B cell (primary cell): ENCODE measurements at regions of chr10 and their contacts with region 1.

Region 1: GRCh38 chr10:101840741-101841453 is 2.7 kb downstream of the KCNIP2 start:
- DNase-seq: peak; percentile 88
- ATAC-seq: peak; percentile 59
- H3K4me3 ChIP-seq: peak overlapping the region in 4 of 5 experiments; percentile 44 to 79 (median 68)
- H3K4me3 Mint-ChIP-seq: peak overlapping the region; percentile 95
- H3K27ac ChIP-seq: peak overlapping the region in 1 of 2 donors; percentile 51
- H3K27ac Mint-ChIP-seq: peak overlapping the region; percentile 92
- H3K4me1 ChIP-seq: peaks cover 50 to 60% of the 10 kb centered on the region in 2 donors
- H3K4me1 Mint-ChIP-seq: peaks cover 52% of the 10 kb centered on the region
- H3K27me3 ChIP-seq: no peaks in the 10 kb centered on the region
- H3K27me3 Mint-ChIP-seq: no peaks in the 10 kb centered on the region
- CTCF ChIP-seq: peak; percentile 91

Region 2: GRCh38 chr10:101749047-101750016 is 91.6 kb before region 1 on chr10:
- CTCF ChIA-PET with region 1: no interaction called
- POLR2A ChIA-PET with region 1: no interaction called
- intact Hi-C with region 1: no loop called
- DNase-seq: no peak
- ATAC-seq: no peak
- H3K4me3 ChIP-seq: no peak overlapping the region
- H3K4me3 Mint-ChIP-seq: no peak overlapping the region
- H3K27ac ChIP-seq: no peak overlapping the region
- H3K27ac Mint-ChIP-seq: no peak overlapping the region
- H3K4me1 ChIP-seq: no peaks in the 10 kb centered on the region
- H3K4me1 Mint-ChIP-seq: no peaks in the 10 kb centered on the region
- H3K27me3 ChIP-seq: peaks cover 0 to 5% (median 2%) of the 10 kb centered on the region in 4 experiments
- H3K27me3 Mint-ChIP-seq: peaks cover 15% of the 10 kb centered on the region
- CTCF ChIP-seq: no peak

Region 3: DNA sequence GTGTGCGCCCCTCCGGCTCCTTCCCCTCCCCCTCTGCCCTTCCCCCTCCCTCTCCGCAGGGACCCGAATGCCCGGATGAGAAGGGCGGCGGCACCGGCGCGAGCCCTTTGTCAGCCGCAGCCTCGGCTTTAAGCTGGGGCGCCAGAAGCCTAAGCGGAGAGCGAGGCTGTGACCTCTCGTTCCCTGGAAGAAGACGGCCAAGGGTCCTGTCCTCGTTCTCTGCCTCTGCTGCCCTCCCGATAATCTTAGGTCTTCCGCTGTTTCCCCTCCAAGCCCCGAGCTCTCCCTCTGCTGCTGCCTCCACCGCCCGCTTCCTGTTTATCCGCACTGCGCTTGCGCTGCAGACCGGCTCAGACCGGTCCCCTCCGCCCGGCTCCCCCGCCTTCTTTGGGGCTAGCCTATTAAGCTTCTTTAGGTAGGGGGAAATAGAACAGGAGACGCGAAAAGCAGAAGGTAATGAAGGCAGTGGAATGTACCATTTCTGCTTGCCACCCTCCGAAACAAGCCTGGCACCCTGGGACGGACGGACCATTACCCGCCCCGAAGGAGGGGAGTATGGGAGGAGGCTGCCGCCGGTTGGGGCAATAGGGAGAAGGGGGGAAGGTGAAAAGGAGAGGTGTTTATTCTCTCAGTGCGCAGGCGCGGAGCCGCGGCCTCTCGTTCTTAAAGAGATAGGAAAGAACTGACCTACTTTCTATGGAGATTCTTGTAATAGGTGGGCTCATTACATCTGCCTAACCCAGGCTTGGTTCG is 22.6 kb before region 1 on chr10 and contains the start of gene OGA:
- CTCF ChIA-PET with region 1: interaction called, 45 read pairs
- POLR2A ChIA-PET with region 1: interaction called, 17 read pairs
- intact Hi-C with region 1: no loop called
- DNase-seq: peak; percentile 98
- ATAC-seq: peak; percentile 87
- H3K4me3 ChIP-seq: peak within 1 kb of the TSS; percentile 56 to 97 (median 92)
- H3K4me3 Mint-ChIP-seq: peak within 1 kb of the TSS; percentile 94
- H3K27ac ChIP-seq: peak within 1 kb of the TSS; percentile 81 to 85
- H3K27ac Mint-ChIP-seq: peak within 1 kb of the TSS; percentile 99
- H3K4me1 ChIP-seq: peaks cover 27% of the 10 kb centered on the region in 2 donors
- H3K4me1 Mint-ChIP-seq: peaks cover 35% of the 10 kb centered on the region
- H3K27me3 ChIP-seq: no peaks in the 10 kb centered on the region
- H3K27me3 Mint-ChIP-seq: no peaks in the 10 kb centered on the region
- CTCF ChIP-seq: no peak
- total RNA-seq, gene OGA: 418 and 442 TPM in 2 replicates

Region 4: GRCh38 chr10:101879456-101880231 is 38.7 kb after region 1 on chr10:
- CTCF ChIA-PET with region 1: interaction called, 115 read pairs
- POLR2A ChIA-PET with region 1: no interaction called
- intact Hi-C with region 1: no loop called
- DNase-seq: no peak
- ATAC-seq: no peak
- H3K4me3 ChIP-seq: no peak overlapping the region
- H3K4me3 Mint-ChIP-seq: no peak overlapping the region
- H3K27ac ChIP-seq: no peak overlapping the region
- H3K27ac Mint-ChIP-seq: no peak overlapping the region
- H3K4me1 ChIP-seq: peaks cover 11 to 12% of the 10 kb centered on the region in 2 donors
- H3K4me1 Mint-ChIP-seq: peaks cover 23% of the 10 kb centered on the region
- H3K27me3 ChIP-seq: no peaks in the 10 kb centered on the region
- H3K27me3 Mint-ChIP-seq: no peaks in the 10 kb centered on the region
- CTCF ChIP-seq: no peak

Region 5: DNA sequence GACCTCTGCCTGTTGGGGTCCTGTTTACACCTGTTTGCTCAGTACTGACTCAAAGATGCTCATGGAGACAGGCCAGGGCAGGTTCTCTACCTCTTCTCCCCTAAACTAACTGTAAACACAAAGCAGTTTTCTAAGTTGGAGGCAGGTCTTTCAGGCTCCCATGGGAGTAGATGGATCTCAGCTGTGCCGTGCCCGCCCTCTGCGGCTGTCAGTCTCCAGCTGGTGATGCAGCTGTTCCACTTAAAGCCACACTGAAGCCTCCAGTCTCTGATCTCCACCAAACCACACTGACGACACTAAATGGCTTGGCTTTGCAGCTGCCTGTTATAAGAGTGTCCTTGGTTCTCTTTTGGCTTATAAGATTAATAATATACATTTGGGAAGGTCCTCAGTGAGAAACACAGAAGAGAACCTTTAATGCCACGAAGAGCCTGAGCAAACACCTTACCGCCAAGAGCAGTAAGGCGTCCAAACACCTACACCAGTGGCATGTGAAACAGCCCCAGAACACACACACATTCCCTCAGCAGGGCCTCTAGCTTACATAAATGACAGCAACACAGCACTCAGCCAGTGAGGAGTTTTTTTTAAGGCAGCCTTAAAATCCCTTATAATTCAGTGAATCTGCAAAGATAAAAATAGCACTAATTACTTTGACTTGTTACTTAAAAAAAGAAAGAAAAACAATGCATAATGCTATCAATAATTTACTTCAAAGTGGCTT is 63.1 kb after region 1 on chr10:
- CTCF ChIA-PET with region 1: interaction called, 31 read pairs
- POLR2A ChIA-PET with region 1: interaction called, 6 read pairs
- intact Hi-C with region 1: loop called (anchors 2 kb)
- DNase-seq: peak; percentile 85
- ATAC-seq: peak; percentile 87
- H3K4me3 ChIP-seq: no peak overlapping the region
- H3K4me3 Mint-ChIP-seq: peak overlapping the region; percentile 76
- H3K27ac ChIP-seq: peak overlapping the region; percentile 50 to 69
- H3K27ac Mint-ChIP-seq: peak overlapping the region; percentile 89
- H3K4me1 ChIP-seq: peaks cover 72 to 76% of the 10 kb centered on the region in 2 donors
- H3K4me1 Mint-ChIP-seq: peaks cover 74% of the 10 kb centered on the region
- H3K27me3 ChIP-seq: no peaks in the 10 kb centered on the region
- H3K27me3 Mint-ChIP-seq: no peaks in the 10 kb centered on the region
- CTCF ChIP-seq: no peak

Region 6: GRCh38 chr10:102020938-102021337 is 180.0 kb after region 1 on chr10:
- CTCF ChIA-PET with region 1: interaction called, 34 read pairs
- POLR2A ChIA-PET with region 1: interaction called, 3 read pairs
- intact Hi-C with region 1: no loop called
- DNase-seq: no peak
- ATAC-seq: no peak
- H3K4me3 ChIP-seq: no peak overlapping the region
- H3K4me3 Mint-ChIP-seq: no peak overlapping the region
- H3K27ac ChIP-seq: no peak overlapping the region
- H3K27ac Mint-ChIP-seq: no peak overlapping the region
- H3K4me1 ChIP-seq: no peaks in the 10 kb centered on the region
- H3K4me1 Mint-ChIP-seq: no peaks in the 10 kb centered on the region
- H3K27me3 ChIP-seq: no peaks in the 10 kb centered on the region
- H3K27me3 Mint-ChIP-seq: no peaks in the 10 kb centered on the region
- CTCF ChIP-seq: no peak

Region 7: DNA sequence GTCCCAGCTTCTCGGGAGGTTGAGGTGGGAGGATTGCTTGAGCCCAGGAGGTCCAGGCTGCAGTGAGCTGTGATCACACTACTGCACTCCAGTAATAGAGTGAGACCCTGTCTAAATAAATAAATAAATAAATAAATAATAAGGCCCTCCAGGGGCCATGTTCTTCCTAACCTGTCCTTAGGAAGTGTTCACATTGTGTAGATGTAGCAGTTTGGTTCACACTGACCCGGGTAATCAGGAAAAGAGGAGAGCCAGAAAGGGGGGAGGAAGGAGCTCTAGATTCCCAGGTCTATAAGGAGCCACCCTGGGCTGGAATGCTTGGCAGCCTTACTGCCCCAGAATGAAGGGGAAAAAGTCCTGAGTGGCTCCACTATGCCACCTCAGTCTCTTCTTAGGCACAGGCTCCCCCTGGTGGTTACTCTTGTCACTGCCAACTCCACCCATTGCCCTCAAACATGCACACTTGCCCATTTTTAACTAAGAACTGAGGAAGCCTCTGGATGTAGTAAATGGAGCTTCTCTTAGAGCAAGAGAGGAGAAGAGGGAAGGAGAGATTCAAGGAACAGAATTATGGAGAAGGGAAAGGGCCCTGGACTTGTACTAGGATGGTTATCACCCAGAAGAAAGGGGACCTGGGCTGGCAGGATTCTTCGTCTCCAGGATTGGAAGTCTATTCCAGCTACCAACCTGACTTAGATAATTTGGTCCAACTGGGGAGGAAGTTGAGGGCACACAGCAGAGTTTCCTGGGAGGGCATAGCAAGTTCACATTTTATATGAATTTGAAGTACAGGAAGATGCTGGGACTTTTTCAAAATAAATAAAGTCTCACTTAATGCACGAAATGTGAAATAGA is 232.0 kb after region 1 on chr10:
- CTCF ChIA-PET with region 1: interaction called, 138 read pairs
- POLR2A ChIA-PET with region 1: interaction called, 5 read pairs
- intact Hi-C with region 1: loop called (anchors 1 kb)
- DNase-seq: peak; percentile 84
- ATAC-seq: peak; percentile 94
- H3K4me3 ChIP-seq: no peak overlapping the region
- H3K4me3 Mint-ChIP-seq: no peak overlapping the region
- H3K27ac ChIP-seq: no peak overlapping the region
- H3K27ac Mint-ChIP-seq: no peak overlapping the region
- H3K4me1 ChIP-seq: no peaks in the 10 kb centered on the region
- H3K4me1 Mint-ChIP-seq: no peaks in the 10 kb centered on the region
- H3K27me3 ChIP-seq: no peaks in the 10 kb centered on the region
- H3K27me3 Mint-ChIP-seq: no peaks in the 10 kb centered on the region
- CTCF ChIP-seq: peak; percentile 91